Heart right ventricle (tissue), 16 donors: ENCODE measurements at regions of chrX and their contacts with region 1.

Region 1: GRCh38 chrX:103941201-103941975 is 21.0 kb upstream of the TMSB15B start:
- DNase-seq: no peak
- ATAC-seq: no peak
- H3K4me3 ChIP-seq: no peak overlapping the region
- H3K27ac ChIP-seq: no peak overlapping the region
- H3K4me1 ChIP-seq: no peaks in the 10 kb centered on the region
- H3K27me3 ChIP-seq: peaks cover 0 to 27% (median 0%) of the 10 kb centered on the region in 7 donors
- CTCF ChIP-seq: peak in 8 of 9 donors; percentile 13 to 59 (median 47)

Region 2: DNA sequence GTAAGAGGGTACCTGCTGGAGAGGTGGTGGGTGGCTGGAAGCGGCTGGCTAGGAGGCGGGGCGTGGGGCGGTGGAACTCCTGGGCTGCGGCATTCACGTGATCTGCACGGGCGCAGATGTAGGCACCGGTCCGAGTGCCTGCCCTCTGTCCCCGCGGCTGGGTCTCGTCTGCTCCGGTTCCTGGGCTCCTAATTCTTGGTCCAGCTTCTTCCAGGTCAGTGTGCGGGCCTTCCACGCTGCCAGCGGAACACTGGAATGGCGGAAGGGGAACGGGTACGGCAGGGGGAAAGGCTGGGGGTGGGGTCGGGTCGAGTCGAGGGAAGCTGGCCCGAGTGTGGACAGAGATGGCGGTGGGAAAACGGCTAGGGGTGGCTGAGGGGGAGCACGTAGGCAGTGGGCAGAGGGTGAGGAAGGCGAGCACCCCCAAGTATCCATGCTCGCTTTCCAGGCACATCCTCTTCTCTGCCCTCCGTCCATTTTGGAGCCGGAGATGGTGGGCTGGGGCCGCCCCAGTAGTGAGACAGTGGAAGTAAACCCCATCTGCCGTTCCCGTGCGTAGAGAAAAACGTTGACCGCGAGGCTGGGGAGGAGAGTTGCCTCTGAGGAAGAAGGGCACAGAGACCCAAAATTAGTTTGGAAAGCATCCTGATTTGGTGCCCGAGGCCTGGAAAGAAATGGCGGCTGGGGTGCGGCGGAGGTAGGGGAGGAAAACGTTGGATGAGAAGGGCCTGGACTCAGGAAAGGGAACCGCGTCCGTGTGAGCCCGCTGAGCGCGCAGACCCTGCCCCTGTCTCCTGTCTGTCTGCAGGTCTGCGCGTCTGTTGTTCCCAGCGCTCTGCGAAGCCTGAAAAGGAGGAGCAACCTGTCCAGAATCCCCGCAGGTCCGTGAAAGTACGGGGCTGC is 355.7 kb before region 1 on chrX and contains the start of gene TCEAL4:
- intact Hi-C with region 1: no loop called
- DNase-seq: peak; percentile 37 to 54
- ATAC-seq: peak; percentile 91 to 96 (median 94)
- H3K4me3 ChIP-seq: peak within 1 kb of the TSS; percentile 38 to 74 (median 68)
- H3K27ac ChIP-seq: peak within 1 kb of the TSS; percentile 63 to 89 (median 86)
- H3K4me1 ChIP-seq: peaks cover 0 to 14% (median 0%) of the 10 kb centered on the region in 9 donors
- H3K27me3 ChIP-seq: peaks cover 0 to 7% (median 0%) of the 10 kb centered on the region in 7 donors
- CTCF ChIP-seq: no peak
- total RNA-seq, gene TCEAL4: 57.7 to 73.2 (median 68.4) TPM

Region 3: GRCh38 chrX:103845165-103845653 is 96.2 kb before region 1 on chrX:
- intact Hi-C with region 1: loop called in 1 of 10 experiments (anchors 1 kb)
- DNase-seq: peak; percentile 34 to 37
- ATAC-seq: peak in 7 of 8 donors; percentile 56 to 80 (median 76)
- H3K4me3 ChIP-seq: no peak overlapping the region
- H3K27ac ChIP-seq: no peak overlapping the region
- H3K4me1 ChIP-seq: peaks cover 0 to 4% (median 0%) of the 10 kb centered on the region in 9 donors
- H3K27me3 ChIP-seq: peaks cover 0 to 36% (median 0%) of the 10 kb centered on the region in 7 donors
- CTCF ChIP-seq: peak in 8 of 9 donors; percentile 6 to 73 (median 64)